BJ (cell line): ENCODE measurements at regions of chr16 and their contacts with region 1.

Region 1: DNA sequence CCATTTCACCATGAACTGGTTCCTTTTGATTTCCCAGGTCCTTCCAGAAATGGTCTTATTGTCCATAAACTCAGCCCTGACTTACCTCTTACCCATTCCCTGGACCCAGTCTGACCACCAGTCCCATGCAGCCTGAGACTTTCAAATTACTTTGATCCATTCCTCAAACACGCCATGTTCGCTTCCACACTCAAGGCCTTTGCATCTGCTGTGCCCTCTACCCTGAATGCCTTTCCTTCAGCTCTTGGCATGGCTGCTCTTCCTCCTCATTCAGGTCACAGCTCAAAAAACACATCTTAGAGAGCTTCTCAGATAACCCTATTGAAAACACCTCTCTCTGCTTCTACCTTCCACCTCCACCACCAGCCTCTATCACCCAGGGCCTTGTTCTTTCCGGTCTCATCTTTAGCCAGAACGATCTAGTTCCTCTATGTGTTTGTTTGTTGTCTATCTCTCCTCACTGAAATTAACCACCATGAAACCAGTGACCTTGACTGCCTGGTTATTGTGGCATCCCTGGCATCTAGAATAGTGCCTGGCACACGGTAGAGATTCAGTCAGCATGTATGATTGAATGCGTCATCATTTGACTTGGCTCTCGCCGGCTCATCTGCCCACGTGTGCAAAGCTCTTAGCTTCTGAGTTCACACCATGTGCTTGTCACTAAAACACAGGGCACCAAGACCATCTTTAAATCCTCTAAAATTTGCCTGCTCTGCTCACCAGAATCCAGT is 12.8 kb downstream of the CRYM start:
- DNase-seq: no peak
- H3K4me3 ChIP-seq: no peak overlapping the region
- H3K27me3 ChIP-seq: no peaks in the 10 kb centered on the region; the same call in 1 of the 2 replicates
- CTCF ChIP-seq: no peak

Region 2: DNA sequence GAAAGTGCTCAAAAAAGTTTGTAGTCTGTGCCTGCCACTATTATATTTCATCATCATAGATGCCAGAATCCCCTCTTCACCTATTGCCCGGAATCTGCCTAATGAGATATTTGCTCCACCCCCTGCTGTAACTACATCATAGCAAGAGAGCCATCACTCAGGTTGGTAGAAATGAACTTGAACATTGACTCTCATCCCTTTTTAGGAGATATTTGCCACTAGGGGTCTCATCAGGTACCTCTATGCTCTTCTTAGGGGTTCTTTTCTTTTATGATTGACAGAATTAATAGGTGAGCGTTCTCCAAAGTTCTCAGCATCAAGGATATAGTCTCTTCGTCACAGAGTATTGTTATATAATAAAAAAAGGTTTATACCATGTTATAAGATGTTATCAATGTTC is 11.8 kb before region 1 on chr16:
- CTCF ChIA-PET with region 1: no interaction called
- POLR2A ChIA-PET with region 1: no interaction called
- DNase-seq: no peak
- H3K4me3 ChIP-seq: no peak overlapping the region
- H3K27me3 ChIP-seq: peaks cover 5% of the 10 kb centered on the region; the same call in 1 of the 2 replicates
- CTCF ChIP-seq: no peak

Region 3: GRCh38 chr16:21277927-21278706 is 12.8 kb after region 1 on chr16 and contains the start of gene CRYM:
- CTCF ChIA-PET with region 1: interaction called, 24 read pairs
- POLR2A ChIA-PET with region 1: no interaction called
- DNase-seq: no peak
- H3K4me3 ChIP-seq: peak within 1 kb of the TSS; percentile 20
- H3K27me3 ChIP-seq: peaks cover 24% of the 10 kb centered on the region
- CTCF ChIP-seq: peak; percentile 90
- polyA plus RNA-seq, gene CRYM: not detected in 2 replicates